T-cell (primary cell): ENCODE measurements at regions of chr17 and their contacts with region 1.

Region 1: DNA sequence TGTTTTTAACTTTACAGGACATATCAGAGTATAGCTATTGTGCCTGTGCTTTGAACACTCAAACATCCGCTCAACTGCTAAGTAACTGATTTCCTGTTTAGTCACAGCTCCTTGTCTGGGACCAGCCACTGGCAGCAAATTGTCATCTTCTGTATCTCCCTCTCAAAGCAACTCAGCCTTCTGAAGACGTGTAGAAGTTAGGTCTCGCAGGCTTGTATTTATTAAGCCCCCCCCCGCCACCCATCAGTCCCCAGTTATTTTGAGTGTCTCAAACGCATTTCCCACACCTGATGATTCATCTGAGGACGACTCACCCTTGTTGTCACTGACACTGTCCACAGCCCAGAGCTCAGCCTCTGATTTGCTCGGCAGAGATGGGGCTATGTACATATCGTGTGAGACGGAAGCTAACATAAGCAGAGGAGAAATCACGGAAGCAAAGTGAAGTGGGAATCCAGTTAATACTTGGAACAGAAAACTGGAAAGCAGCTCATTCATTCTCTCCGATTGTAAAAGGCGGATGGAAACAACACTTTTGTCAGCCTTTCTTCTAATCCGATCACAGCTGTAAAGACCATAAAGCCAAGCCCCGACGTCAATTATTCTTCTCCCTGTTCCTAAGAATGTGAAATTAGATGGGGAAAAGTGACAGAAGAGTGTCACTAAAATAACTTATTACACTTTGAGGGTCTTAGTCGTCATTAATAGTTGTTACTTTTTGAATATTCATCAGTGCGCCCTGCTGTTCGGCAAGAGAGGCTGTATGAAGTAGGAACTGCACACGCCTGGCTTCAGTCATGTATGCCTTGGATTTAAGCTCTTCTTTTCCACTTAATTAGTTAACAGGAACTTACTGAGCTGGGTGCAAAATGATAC is 64.2 kb downstream of the PITPNC1 start:
- DNase-seq: peak; percentile 48 to 90 (median 73)
- ATAC-seq: peak; percentile 91 to 94 (median 93)
- H3K4me3 ChIP-seq: peak overlapping the region; percentile 6 to 46
- H3K4me3 Mint-ChIP-seq: peak overlapping the region; percentile 65 to 81 (median 75)
- H3K27ac ChIP-seq: peak overlapping the region; percentile 98
- H3K27ac Mint-ChIP-seq: peak overlapping the region; percentile 96 to 97
- H3K4me1 ChIP-seq: peaks cover 60 to 88% of the 10 kb centered on the region in 2 experiments
- H3K4me1 Mint-ChIP-seq: peaks cover 93 to 97% (median 93%) of the 10 kb centered on the region in 3 donors
- H3K27me3 ChIP-seq: no peaks in the 10 kb centered on the region
- H3K27me3 Mint-ChIP-seq: no peaks in the 10 kb centered on the region

Region 2: DNA sequence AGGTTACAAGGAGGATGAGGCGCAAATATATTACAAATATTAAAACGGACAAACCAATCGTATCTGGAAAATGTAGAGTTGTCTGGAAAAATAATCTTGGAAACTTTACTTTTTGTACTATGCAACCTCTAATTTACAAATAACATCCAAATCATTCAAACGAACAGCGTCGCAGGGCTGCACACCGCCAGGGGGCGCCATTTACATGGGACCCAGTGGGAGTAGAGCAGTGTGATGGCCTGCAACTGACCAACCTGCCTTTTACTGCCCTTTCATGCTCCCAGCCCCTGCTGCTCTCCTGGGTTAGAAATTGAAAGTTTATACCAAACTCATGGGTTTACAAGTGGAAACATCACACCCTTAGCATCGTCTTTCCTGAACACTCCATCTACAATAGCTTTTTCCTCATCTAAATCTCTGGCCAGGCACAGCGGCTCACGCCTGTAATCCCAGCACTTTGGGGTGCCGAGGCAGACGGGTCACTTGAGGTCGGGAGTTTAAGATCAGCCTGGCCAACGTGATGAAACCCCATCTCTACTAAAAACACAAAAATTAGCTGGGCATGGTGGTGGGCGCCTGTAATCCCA is 54.2 kb before region 1 on chr17:
- CTCF ChIA-PET with region 1: interaction called, 15 to 18 read pairs
- POLR2A ChIA-PET with region 1: interaction called, 3 to 8 read pairs
- DNase-seq: peak in 19 of 35 experiments; percentile 28 to 74 (median 44)
- ATAC-seq: no peak
- H3K4me3 ChIP-seq: no peak overlapping the region
- H3K4me3 Mint-ChIP-seq: peak overlapping the region in 1 of 3 donors; percentile 45
- H3K27ac ChIP-seq: peak overlapping the region; percentile 46
- H3K27ac Mint-ChIP-seq: peak overlapping the region; percentile 93 to 94
- H3K4me1 ChIP-seq: peaks cover 27 to 78% of the 10 kb centered on the region in 2 experiments
- H3K4me1 Mint-ChIP-seq: peaks cover 78 to 84% (median 83%) of the 10 kb centered on the region in 3 donors
- H3K27me3 ChIP-seq: no peaks in the 10 kb centered on the region
- H3K27me3 Mint-ChIP-seq: no peaks in the 10 kb centered on the region

Region 3: GRCh38 chr17:67421869-67422273 is 19.4 kb before region 1 on chr17:
- CTCF ChIA-PET with region 1: interaction called in 1 of 2 experiments, 20 read pairs
- POLR2A ChIA-PET with region 1: interaction called, 6 to 13 read pairs
- DNase-seq: peak in 31 of 35 experiments; percentile 32 to 91 (median 60)
- ATAC-seq: peak; percentile 96 to 98 (median 96)
- H3K4me3 ChIP-seq: no peak overlapping the region
- H3K4me3 Mint-ChIP-seq: peak overlapping the region; percentile 45 to 67 (median 52)
- H3K27ac ChIP-seq: peak overlapping the region; percentile 93
- H3K27ac Mint-ChIP-seq: peak overlapping the region; percentile 95 to 96
- H3K4me1 ChIP-seq: peaks cover 52 to 80% of the 10 kb centered on the region in 2 experiments
- H3K4me1 Mint-ChIP-seq: peaks cover 89 to 94% (median 92%) of the 10 kb centered on the region in 3 donors
- H3K27me3 ChIP-seq: no peaks in the 10 kb centered on the region
- H3K27me3 Mint-ChIP-seq: no peaks in the 10 kb centered on the region

Region 4: DNA sequence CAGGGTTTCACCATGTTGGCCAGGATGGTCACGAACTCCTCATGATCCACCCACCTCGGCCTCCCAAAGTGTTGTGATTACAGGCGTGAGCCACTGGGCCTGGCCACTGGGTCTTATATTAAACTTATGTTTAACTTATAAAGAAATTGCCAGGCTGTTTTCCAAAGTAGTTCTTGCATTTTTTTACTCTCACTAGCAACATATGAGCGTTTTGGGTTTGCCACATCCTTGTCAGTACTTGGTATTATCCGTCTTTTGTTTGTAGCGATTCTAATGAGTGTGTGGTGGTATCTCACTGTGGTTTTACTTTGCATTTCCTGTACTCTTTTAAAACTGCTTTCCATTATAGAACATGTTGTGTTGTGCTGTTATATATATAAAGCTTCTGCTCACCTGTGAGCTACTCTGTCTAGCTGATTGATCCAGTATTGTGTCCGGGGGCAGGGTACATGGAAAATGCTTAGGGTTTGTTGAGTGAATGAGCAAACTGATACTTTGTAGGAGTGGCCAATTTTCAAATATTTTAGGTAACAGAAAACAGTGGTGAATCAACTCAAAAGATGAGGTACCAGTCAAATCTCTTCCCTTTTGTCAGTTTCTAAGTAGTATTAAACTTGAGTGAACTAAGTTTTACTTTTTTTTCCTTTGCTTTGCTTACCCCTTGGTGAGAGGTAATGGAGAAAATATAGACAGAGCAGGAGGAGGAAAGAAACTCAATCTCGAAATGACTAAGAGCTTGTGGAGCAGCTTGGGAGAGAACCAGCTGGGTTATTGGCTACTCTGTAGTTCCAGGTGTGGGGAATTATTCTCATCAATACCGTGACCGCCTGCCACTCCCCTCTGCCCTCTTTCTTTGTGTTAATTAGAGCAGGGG is 11.6 kb after region 1 on chr17:
- CTCF ChIA-PET with region 1: interaction called, 6 to 16 read pairs
- POLR2A ChIA-PET with region 1: interaction called, 8 to 11 read pairs
- DNase-seq: peak in 10 of 35 experiments; percentile 15 to 78 (median 36)
- ATAC-seq: peak; percentile 92 to 95 (median 94)
- H3K4me3 ChIP-seq: peak overlapping the region; percentile 20 to 27
- H3K4me3 Mint-ChIP-seq: peak overlapping the region; percentile 54 to 65 (median 62)
- H3K27ac ChIP-seq: peak overlapping the region; percentile 77
- H3K27ac Mint-ChIP-seq: peak overlapping the region; percentile 97 to 98
- H3K4me1 ChIP-seq: peaks cover 57 to 78% of the 10 kb centered on the region in 2 experiments
- H3K4me1 Mint-ChIP-seq: peaks cover 95 to 100% (median 96%) of the 10 kb centered on the region in 3 donors
- H3K27me3 ChIP-seq: no peaks in the 10 kb centered on the region
- H3K27me3 Mint-ChIP-seq: no peaks in the 10 kb centered on the region